Mammary epithelial cell (primary cell): ENCODE measurements at regions of chr12 and their contacts with region 1.

Region 1: DNA sequence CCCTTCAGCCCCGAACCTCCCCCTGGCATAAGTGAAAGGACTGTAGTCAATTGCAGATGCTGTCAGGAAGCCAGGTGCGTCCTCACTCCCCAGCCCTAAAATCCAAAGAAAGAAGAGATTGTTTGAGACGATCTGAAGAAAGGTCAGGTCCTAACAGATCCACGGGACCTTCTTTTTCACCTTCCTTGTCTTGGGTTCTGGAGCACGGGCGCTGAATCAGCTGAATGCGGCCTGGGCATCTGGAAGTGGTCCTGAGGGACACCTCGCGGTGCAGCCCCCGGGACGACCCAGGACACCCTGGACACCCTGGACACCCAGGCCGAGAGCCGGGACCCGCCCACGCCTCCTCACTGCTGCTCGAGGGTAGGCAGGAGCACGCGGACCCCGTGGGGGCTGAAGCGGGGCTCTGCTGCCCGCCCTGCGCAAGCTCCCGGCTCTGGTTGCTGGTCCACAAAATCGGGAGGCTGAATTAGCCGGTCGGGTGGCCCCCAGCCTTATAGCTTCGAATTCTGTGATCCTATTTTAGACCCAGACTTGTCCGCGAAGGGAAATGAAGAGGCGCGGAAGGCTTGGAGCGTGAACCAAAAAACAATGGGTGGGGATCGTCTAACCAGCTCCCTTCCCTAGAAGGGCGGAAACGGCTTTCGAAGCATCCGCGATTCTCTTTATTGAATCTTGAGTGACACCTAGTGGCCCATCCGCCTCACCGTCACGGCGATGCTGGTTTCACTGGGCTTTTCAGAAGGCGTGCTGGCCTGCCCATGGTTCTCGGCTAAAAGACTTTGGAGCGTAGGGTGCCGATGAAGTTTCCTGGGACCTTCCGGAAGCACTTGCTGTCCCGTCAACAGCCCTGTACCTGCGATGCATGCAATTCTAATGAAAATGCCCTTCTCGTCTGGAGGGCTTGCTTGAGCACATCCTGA is 46.4 kb upstream of the PLXNC1 start:
- DNase-seq: peak; percentile 80
- H3K4me3 ChIP-seq: peak overlapping the region; percentile 50 to 66 (median 59)
- H3K27ac ChIP-seq: no peak overlapping the region
- H3K4me1 ChIP-seq: peaks cover 28% of the 10 kb centered on the region
- H3K27me3 ChIP-seq: no peaks in the 10 kb centered on the region
- CTCF ChIP-seq: peak; percentile 77 to 83

Region 2: DNA sequence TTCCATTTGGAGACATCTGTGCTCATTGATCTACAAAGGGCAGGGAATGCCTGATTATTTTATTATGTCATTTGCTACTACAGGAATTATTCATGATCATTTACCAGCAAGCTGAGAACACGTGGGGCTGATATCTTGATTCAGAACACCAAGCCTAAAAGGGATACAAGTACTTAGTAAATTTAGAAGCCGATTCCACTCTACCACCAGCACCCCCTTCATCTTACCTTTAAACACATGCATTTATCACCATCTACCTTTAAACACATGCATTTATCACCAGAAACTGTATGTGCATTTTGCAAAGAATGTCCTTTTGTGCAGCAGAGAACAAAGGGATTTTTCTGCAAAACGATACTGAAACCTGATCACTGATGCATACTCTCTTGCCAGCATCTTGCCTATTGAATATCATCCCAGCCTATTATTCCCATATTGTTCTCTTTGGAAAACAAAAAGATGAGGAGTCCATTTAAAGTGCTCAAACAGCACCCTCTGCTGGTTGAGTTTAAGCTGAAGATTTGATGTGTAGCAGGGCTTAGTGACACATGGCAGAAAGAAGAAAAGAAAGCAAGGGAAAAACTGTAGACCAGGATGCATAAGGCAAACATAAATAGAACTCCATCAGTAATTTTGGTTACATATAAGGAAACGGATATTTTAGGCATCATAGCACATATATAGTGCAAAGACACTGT is 1531.8 kb before region 1 on chr12:
- CTCF ChIA-PET with region 1: no interaction called
- dilution Hi-C with region 1: no loop called
- in situ Hi-C with region 1: no loop called
- intact Hi-C with region 1: loop called (anchors 5 kb)
- DNase-seq: peak; percentile 80
- H3K4me3 ChIP-seq: no peak overlapping the region
- H3K27ac ChIP-seq: no peak overlapping the region
- H3K4me1 ChIP-seq: peaks cover 27% of the 10 kb centered on the region
- H3K27me3 ChIP-seq: no peaks in the 10 kb centered on the region
- CTCF ChIP-seq: peak; percentile 51 to 69

Region 3: GRCh38 chr12:93419388-93420034 is 682.5 kb before region 1 on chr12:
- CTCF ChIA-PET with region 1: interaction called, 3 read pairs
- dilution Hi-C with region 1: no loop called
- in situ Hi-C with region 1: no loop called
- intact Hi-C with region 1: loop called (anchors 5 kb)
- DNase-seq: peak; percentile 32
- H3K4me3 ChIP-seq: no peak overlapping the region
- H3K27ac ChIP-seq: no peak overlapping the region
- H3K4me1 ChIP-seq: no peaks in the 10 kb centered on the region
- H3K27me3 ChIP-seq: no peaks in the 10 kb centered on the region
- CTCF ChIP-seq: peak; percentile 43 to 55

Region 4: GRCh38 chr12:93514853-93515252 is 587.1 kb before region 1 on chr12:
- CTCF ChIA-PET with region 1: no interaction called
- dilution Hi-C with region 1: loop called (anchors 5 kb)
- in situ Hi-C with region 1: no loop called
- intact Hi-C with region 1: no loop called
- DNase-seq: peak; percentile 27
- H3K4me3 ChIP-seq: no peak overlapping the region
- H3K27ac ChIP-seq: no peak overlapping the region
- H3K4me1 ChIP-seq: peaks cover 5% of the 10 kb centered on the region
- H3K27me3 ChIP-seq: no peaks in the 10 kb centered on the region
- CTCF ChIP-seq: no peak

Region 5: DNA sequence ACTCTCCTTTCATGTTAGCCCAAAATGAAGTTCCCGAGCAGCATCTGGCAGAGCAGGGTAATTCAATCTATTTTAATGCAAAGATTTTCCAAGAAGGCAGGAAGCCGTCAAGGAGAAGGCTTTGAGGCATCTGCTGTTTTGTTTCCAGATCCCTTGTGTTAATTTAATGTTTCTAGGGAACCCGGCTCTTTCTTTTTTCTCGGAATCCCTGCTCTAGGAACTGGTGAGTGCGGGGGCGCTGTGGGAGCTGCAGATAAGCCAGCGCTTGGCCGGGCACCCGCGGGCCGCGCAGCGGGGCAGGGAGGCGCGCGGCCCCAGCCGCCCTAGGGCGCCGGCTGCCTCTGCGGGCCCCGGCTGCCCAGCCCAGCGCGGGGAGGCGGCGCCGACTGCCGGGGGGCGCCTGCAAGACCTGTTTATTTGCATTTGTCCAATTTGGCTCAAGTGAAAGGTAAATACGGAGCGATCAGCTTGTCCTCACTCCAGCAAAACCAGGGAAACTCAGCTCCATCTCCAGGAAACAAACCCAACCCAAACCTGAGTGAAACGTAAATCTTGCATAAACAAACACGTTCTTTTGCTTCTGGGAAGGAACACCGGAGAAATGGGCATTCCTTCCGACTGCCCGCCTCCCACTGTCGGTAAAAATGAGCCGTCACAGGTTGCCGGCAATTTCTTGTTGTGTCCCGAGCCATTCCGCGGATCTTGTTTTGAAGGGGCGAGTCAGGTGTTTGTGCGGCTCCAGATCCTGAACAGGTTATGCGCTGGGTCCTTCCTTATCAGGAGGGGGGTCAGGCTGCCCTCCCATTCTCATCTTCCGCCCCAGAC is 359.7 kb before region 1 on chr12:
- CTCF ChIA-PET with region 1: interaction called, 3 read pairs
- dilution Hi-C with region 1: no loop called
- in situ Hi-C with region 1: no loop called
- intact Hi-C with region 1: loop called (anchors 1 kb)
- DNase-seq: peak; percentile 65
- H3K4me3 ChIP-seq: peak overlapping the region; percentile 55 to 74 (median 60)
- H3K27ac ChIP-seq: peak overlapping the region; percentile 81
- H3K4me1 ChIP-seq: peaks cover 16% of the 10 kb centered on the region
- H3K27me3 ChIP-seq: no peaks in the 10 kb centered on the region
- CTCF ChIP-seq: peak; percentile 12 to 48

Region 6: DNA sequence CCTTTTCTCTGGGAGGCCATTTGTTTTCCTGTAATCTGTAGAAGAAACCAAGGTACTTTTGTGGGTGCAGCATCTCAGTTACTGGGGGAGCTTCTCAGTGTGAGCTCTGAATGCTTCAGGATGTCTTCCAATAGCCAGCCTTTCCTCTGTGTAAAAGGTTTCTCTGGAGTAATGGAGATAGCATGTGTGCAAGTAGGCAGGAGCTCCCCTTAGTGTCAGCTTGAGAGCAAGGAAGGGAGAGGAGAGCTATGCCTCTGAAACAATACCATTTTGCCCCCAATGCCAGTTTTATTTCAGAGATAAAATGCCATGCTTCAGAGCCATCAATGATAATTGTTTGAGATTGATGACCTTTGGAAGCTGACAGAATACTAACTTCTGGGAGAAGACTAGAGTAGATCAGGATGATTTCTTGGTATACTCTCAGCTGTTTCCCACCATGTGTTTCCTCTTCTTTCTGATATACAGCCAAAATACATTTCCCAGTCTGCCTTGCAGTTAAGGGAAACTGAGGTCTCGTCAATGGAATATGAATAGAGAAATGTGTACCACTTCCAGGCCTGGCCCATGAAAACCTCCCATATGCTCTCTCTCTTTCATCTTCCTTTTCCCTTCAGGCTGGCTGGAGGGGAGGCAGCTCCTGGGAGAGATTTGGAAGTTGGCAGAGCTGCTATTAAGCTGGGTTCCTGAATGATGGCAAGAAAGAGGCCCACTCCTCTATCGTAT is 299.1 kb before region 1 on chr12:
- CTCF ChIA-PET with region 1: interaction called, 7 read pairs
- dilution Hi-C with region 1: no loop called
- in situ Hi-C with region 1: no loop called
- intact Hi-C with region 1: loop called (anchors 1 kb)
- DNase-seq: no peak
- H3K4me3 ChIP-seq: no peak overlapping the region
- H3K27ac ChIP-seq: no peak overlapping the region
- H3K4me1 ChIP-seq: peaks cover 33% of the 10 kb centered on the region
- H3K27me3 ChIP-seq: no peaks in the 10 kb centered on the region
- CTCF ChIP-seq: peak in 1 of 2 donors; percentile 31

Region 7: GRCh38 chr12:93990832-93991803 is 110.9 kb before region 1 on chr12:
- CTCF ChIA-PET with region 1: no interaction called
- dilution Hi-C with region 1: no loop called
- in situ Hi-C with region 1: no loop called
- intact Hi-C with region 1: loop called (anchors 1 kb)
- DNase-seq: no peak
- H3K4me3 ChIP-seq: no peak overlapping the region
- H3K27ac ChIP-seq: no peak overlapping the region
- H3K4me1 ChIP-seq: no peaks in the 10 kb centered on the region
- H3K27me3 ChIP-seq: no peaks in the 10 kb centered on the region
- CTCF ChIP-seq: peak; percentile 17 to 52

Region 8: DNA sequence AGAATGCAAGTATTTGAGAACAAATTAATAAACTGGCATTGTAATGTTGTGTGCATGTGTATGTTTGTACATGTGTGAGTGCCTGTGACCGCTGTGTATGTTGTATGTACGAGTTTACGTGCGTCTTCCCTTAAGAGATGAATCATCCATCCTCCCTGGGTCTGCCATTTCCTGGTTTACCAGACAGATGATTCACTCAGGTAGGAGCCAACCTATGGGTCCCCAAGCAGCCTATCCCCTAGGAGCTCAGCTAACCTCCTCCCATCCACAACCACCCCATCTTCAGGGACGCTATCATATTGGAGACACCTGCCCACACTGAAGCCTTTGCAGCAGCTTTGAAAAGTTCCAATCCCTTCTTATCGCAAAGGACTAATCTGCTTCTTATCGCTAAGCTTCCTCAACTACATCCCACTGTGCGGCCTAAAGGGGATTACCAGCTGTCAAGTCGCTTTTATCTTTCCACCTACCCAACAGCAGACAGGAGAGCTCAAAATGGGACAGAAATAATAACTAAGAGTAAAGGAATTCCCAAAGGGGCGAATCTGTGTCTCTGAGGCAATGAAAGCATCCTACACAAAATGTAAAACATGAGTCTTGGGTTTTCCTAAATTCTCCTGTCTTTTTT is 629.8 kb after region 1 on chr12:
- CTCF ChIA-PET with region 1: no interaction called
- dilution Hi-C with region 1: no loop called
- in situ Hi-C with region 1: no loop called
- intact Hi-C with region 1: no loop called
- DNase-seq: no peak
- H3K4me3 ChIP-seq: no peak overlapping the region
- H3K27ac ChIP-seq: no peak overlapping the region
- H3K4me1 ChIP-seq: no peaks in the 10 kb centered on the region
- H3K27me3 ChIP-seq: peaks cover 3% of the 10 kb centered on the region
- CTCF ChIP-seq: no peak